Naive thymus-derived CD4-positive, alpha-beta T cell (primary cell): ENCODE measurements at regions of chr10 and their contacts with region 1.

Region 1: GRCh38 chr10:110871298-110872084 is at the start of gene PDCD4:
- DNase-seq: peak; percentile 83 to 98 (median 90)
- ATAC-seq: peak; percentile 78
- H3K4me3 ChIP-seq: peak within 1 kb of the TSS; percentile 78
- H3K4me3 Mint-ChIP-seq: peak within 1 kb of the TSS; percentile 79 to 99 (median 96)
- H3K27ac ChIP-seq: peak within 1 kb of the TSS; percentile 100
- H3K27ac Mint-ChIP-seq: peak within 1 kb of the TSS; percentile 95 to 100 (median 99)
- H3K4me1 ChIP-seq: peaks cover 53 to 71% of the 10 kb centered on the region in 2 donors
- H3K4me1 Mint-ChIP-seq: peaks cover 43 to 77% (median 68%) of the 10 kb centered on the region in 7 donors
- H3K27me3 ChIP-seq: no peaks in the 10 kb centered on the region
- H3K27me3 Mint-ChIP-seq: peaks cover 0 to 2% (median 0%) of the 10 kb centered on the region in 5 donors
- total RNA-seq, gene PDCD4: 93.7 to 283 (median 223) TPM

Region 2: GRCh38 chr10:109823196-109823595 is 1048.3 kb before region 1 on chr10:
- CTCF ChIA-PET with region 1: no interaction called
- POLR2A ChIA-PET with region 1: no interaction called
- intact Hi-C with region 1: no loop called
- DNase-seq: no peak
- ATAC-seq: no peak
- H3K4me3 ChIP-seq: no peak overlapping the region
- H3K4me3 Mint-ChIP-seq: no peak overlapping the region
- H3K27ac ChIP-seq: no peak overlapping the region
- H3K27ac Mint-ChIP-seq: no peak overlapping the region
- H3K4me1 ChIP-seq: no peaks in the 10 kb centered on the region
- H3K4me1 Mint-ChIP-seq: no peaks in the 10 kb centered on the region
- H3K27me3 ChIP-seq: no peaks in the 10 kb centered on the region
- H3K27me3 Mint-ChIP-seq: peaks cover 0 to 38% (median 32%) of the 10 kb centered on the region in 5 donors

Region 3: GRCh38 chr10:110304780-110305421 is 566.6 kb before region 1 on chr10 and contains the start of gene SMNDC1:
- CTCF ChIA-PET with region 1: no interaction called
- POLR2A ChIA-PET with region 1: no interaction called
- intact Hi-C with region 1: loop called in 1 of 2 experiments (anchors 5 kb)
- DNase-seq: peak; percentile 93 to 97 (median 96)
- ATAC-seq: peak; percentile 94
- H3K4me3 ChIP-seq: peak within 1 kb of the TSS; percentile 91
- H3K4me3 Mint-ChIP-seq: peak within 1 kb of the TSS; percentile 94 to 99 (median 98)
- H3K27ac ChIP-seq: peak within 1 kb of the TSS; percentile 89
- H3K27ac Mint-ChIP-seq: peak within 1 kb of the TSS; percentile 97 to 100 (median 100)
- H3K4me1 ChIP-seq: peaks cover 32 to 38% of the 10 kb centered on the region in 2 donors
- H3K4me1 Mint-ChIP-seq: peaks cover 26 to 61% (median 55%) of the 10 kb centered on the region in 7 donors
- H3K27me3 ChIP-seq: no peaks in the 10 kb centered on the region
- H3K27me3 Mint-ChIP-seq: no peaks in the 10 kb centered on the region
- total RNA-seq, gene SMNDC1: 34.4 to 43.1 (median 40.1) TPM

Region 4: GRCh38 chr10:110774069-110775019 is 97.1 kb before region 1 on chr10:
- CTCF ChIA-PET with region 1: no interaction called
- POLR2A ChIA-PET with region 1: no interaction called
- intact Hi-C with region 1: loop called in 1 of 2 experiments (anchors 1 kb)
- DNase-seq: peak in 1 of 9 donors; percentile 54
- ATAC-seq: peak; percentile 41
- H3K4me3 ChIP-seq: no peak overlapping the region
- H3K4me3 Mint-ChIP-seq: peak overlapping the region in 1 of 10 donors; percentile 42
- H3K27ac ChIP-seq: no peak overlapping the region
- H3K27ac Mint-ChIP-seq: peak overlapping the region in 2 of 9 donors; percentile 47 to 88
- H3K4me1 ChIP-seq: peaks cover 0 to 11% of the 10 kb centered on the region in 2 donors
- H3K4me1 Mint-ChIP-seq: peaks cover 2 to 39% (median 9%) of the 10 kb centered on the region in 7 donors
- H3K27me3 ChIP-seq: no peaks in the 10 kb centered on the region
- H3K27me3 Mint-ChIP-seq: peaks cover 0 to 3% (median 0%) of the 10 kb centered on the region in 5 donors

Region 5: DNA sequence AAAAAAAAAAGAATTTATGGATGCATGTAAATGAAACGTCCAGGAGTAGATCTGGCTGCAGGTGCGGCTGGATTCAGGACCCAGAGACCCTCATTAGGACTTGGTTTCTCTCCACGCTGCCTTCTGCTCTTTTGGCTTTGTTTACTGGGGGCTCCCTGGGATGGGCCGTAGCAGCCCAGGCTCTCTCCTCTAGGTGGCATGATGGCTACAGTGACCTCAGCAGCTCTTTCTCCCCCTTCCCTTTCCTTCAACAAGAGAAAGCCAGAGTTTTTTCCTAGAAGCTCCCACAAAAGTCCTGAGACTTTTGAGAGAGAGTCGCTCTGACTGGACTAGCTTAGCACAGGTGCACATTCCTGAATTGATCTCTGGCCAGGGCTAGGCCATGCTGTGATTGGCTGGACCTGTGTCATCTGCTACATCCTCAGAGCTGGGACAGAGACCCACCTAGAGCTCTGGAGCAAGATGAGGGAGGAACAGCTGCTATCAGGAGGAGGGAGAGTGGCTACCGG is 67.6 kb before region 1 on chr10:
- CTCF ChIA-PET with region 1: interaction called, 7 read pairs
- POLR2A ChIA-PET with region 1: interaction called, 46 read pairs
- intact Hi-C with region 1: loop called (anchors 1 kb)
- DNase-seq: peak in 2 of 9 donors; percentile 25 to 36
- ATAC-seq: peak; percentile 67
- H3K4me3 ChIP-seq: peak overlapping the region; percentile 29
- H3K4me3 Mint-ChIP-seq: peak overlapping the region in 9 of 10 donors; percentile 12 to 78 (median 69)
- H3K27ac ChIP-seq: peak overlapping the region; percentile 61
- H3K27ac Mint-ChIP-seq: peak overlapping the region; percentile 58 to 100 (median 93)
- H3K4me1 ChIP-seq: peaks cover 25 to 34% of the 10 kb centered on the region in 2 donors
- H3K4me1 Mint-ChIP-seq: peaks cover 30 to 53% (median 47%) of the 10 kb centered on the region in 7 donors
- H3K27me3 ChIP-seq: no peaks in the 10 kb centered on the region
- H3K27me3 Mint-ChIP-seq: no peaks in the 10 kb centered on the region

Region 6: GRCh38 chr10:110843031-110843430 is 28.5 kb before region 1 on chr10:
- CTCF ChIA-PET with region 1: interaction called, 3 read pairs
- POLR2A ChIA-PET with region 1: interaction called, 16 read pairs
- intact Hi-C with region 1: loop called in 1 of 2 experiments (anchors 1 kb)
- DNase-seq: peak in 7 of 9 donors; percentile 35 to 60 (median 46)
- ATAC-seq: peak; percentile 88
- H3K4me3 ChIP-seq: no peak overlapping the region
- H3K4me3 Mint-ChIP-seq: peak overlapping the region in 8 of 10 donors; percentile 1 to 67 (median 42)
- H3K27ac ChIP-seq: peak overlapping the region; percentile 40
- H3K27ac Mint-ChIP-seq: peak overlapping the region; percentile 79 to 98 (median 89)
- H3K4me1 ChIP-seq: peaks cover 22 to 27% of the 10 kb centered on the region in 2 donors
- H3K4me1 Mint-ChIP-seq: peaks cover 36 to 67% (median 54%) of the 10 kb centered on the region in 7 donors
- H3K27me3 ChIP-seq: no peaks in the 10 kb centered on the region
- H3K27me3 Mint-ChIP-seq: no peaks in the 10 kb centered on the region

Region 7: DNA sequence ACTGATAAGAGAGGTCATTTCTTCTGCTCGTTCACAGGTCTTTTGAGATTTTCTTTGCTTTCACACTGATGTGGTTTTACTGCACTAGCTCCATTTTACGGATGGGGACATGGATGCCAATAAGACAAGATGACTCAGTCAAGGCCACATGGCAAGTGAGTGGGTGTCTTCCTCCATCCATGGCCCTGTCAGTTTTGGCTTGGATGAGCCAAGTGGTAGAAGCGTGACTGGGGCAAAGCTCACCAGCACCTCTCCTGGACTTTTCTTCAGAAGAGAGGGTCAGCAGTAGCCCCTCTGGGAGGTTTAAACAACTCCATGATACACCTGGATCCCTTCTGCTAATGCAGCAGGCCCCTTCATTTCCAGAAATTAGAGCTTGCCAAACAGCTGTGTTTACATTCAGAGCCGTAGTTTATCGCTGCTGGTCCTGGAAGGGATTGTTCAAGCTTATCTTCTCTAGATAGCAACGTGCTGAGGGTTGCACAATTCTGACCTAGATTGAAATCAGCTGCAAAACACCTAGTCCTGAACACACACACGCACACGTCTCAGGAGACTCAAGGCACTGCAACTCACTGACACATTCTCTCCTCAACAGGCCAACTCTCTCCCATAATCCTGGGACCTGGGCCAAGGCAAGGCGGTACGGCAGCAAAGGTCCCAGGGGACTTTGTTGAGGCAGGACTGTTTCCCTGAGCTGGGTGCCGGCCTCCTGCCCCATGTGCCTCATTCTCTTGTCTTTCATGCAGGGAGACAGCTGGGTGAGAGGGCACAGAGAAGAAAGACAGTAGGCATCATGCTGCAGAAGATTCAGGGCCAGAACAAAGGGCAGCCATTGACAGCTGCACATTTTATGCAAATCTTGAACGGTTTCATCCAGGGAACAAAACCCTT is 14.0 kb before region 1 on chr10:
- CTCF ChIA-PET with region 1: interaction called, 7 read pairs
- POLR2A ChIA-PET with region 1: interaction called, 76 read pairs
- intact Hi-C with region 1: loop called (anchors 1 kb)
- DNase-seq: no peak
- ATAC-seq: peak; percentile 19
- H3K4me3 ChIP-seq: no peak overlapping the region
- H3K4me3 Mint-ChIP-seq: peak overlapping the region in 9 of 10 donors; percentile 29 to 79 (median 65)
- H3K27ac ChIP-seq: peak overlapping the region; percentile 83
- H3K27ac Mint-ChIP-seq: peak overlapping the region; percentile 67 to 100 (median 97)
- H3K4me1 ChIP-seq: peaks cover 81 to 89% of the 10 kb centered on the region in 2 donors
- H3K4me1 Mint-ChIP-seq: peaks cover 54 to 92% (median 88%) of the 10 kb centered on the region in 7 donors
- H3K27me3 ChIP-seq: no peaks in the 10 kb centered on the region
- H3K27me3 Mint-ChIP-seq: no peaks in the 10 kb centered on the region

Region 8: GRCh38 chr10:110893559-110894179 is 22.2 kb after region 1 on chr10:
- CTCF ChIA-PET with region 1: interaction called, 7 read pairs
- POLR2A ChIA-PET with region 1: interaction called, 7 read pairs
- intact Hi-C with region 1: loop called (anchors 1 to 2 kb)
- DNase-seq: peak in 6 of 9 donors; percentile 47 to 75 (median 66)
- ATAC-seq: peak; percentile 91
- H3K4me3 ChIP-seq: no peak overlapping the region
- H3K4me3 Mint-ChIP-seq: peak overlapping the region in 3 of 10 donors; percentile 2 to 34 (median 6)
- H3K27ac ChIP-seq: peak overlapping the region; percentile 56
- H3K27ac Mint-ChIP-seq: peak overlapping the region in 7 of 9 donors; percentile 2 to 68 (median 32)
- H3K4me1 ChIP-seq: peaks cover 0 to 20% of the 10 kb centered on the region in 2 donors
- H3K4me1 Mint-ChIP-seq: peaks cover 10 to 66% (median 51%) of the 10 kb centered on the region in 7 donors
- H3K27me3 ChIP-seq: no peaks in the 10 kb centered on the region
- H3K27me3 Mint-ChIP-seq: no peaks in the 10 kb centered on the region

Region 9: DNA sequence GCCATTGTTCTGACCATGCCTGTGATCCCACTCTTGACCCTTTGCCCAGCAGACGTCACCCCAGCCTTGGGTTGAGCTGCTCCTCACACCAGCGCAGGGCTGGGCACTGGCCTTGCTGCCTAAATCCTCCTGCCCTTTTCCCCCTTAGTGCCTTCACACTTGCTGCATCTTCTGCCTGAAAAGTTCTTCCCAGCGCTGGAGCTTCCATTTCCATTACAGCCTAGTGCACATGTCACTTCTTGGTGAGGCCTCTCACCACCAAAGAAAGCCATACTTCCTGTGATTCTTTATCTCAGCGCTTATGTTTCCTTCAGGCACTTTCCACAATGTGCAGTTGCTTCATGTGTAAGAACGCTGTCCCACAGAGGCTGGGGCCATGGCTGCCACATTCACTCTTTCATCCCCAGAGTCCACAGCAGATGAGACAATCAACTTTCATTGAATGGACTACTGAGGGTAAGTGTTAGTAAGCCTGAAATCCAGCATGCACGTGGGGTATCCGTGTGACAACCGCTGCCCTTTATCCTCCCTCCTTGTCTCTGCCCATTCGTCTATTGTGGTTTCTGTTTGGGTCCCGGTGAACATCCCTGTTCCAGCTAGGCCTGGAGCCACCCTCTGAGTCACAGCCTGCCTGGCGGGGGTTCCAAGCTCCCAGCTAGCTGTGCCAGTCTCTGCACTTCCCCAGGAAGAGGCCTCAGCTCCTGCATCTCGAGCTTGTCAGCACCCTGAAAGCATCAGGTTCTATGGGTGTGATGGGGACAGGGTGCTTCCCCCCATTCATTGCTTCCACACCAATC is 242.7 kb after region 1 on chr10:
- CTCF ChIA-PET with region 1: no interaction called
- POLR2A ChIA-PET with region 1: no interaction called
- intact Hi-C with region 1: no loop called
- DNase-seq: no peak
- ATAC-seq: peak; percentile 19
- H3K4me3 ChIP-seq: no peak overlapping the region
- H3K4me3 Mint-ChIP-seq: peak overlapping the region in 1 of 10 donors; percentile 24
- H3K27ac ChIP-seq: no peak overlapping the region
- H3K27ac Mint-ChIP-seq: peak overlapping the region in 1 of 9 donors; percentile 26
- H3K4me1 ChIP-seq: no peaks in the 10 kb centered on the region
- H3K4me1 Mint-ChIP-seq: peaks cover 9 to 21% (median 13%) of the 10 kb centered on the region in 7 donors
- H3K27me3 ChIP-seq: no peaks in the 10 kb centered on the region
- H3K27me3 Mint-ChIP-seq: peaks cover 0 to 11% (median 0%) of the 10 kb centered on the region in 5 donors

Region 10: GRCh38 chr10:111207500-111207899 is 336.0 kb after region 1 on chr10:
- CTCF ChIA-PET with region 1: no interaction called
- POLR2A ChIA-PET with region 1: no interaction called
- intact Hi-C with region 1: no loop called
- DNase-seq: peak in 5 of 9 donors; percentile 1 to 19 (median 12)
- ATAC-seq: no peak
- H3K4me3 ChIP-seq: no peak overlapping the region
- H3K4me3 Mint-ChIP-seq: no peak overlapping the region
- H3K27ac ChIP-seq: no peak overlapping the region
- H3K27ac Mint-ChIP-seq: no peak overlapping the region
- H3K4me1 ChIP-seq: no peaks in the 10 kb centered on the region
- H3K4me1 Mint-ChIP-seq: no peaks in the 10 kb centered on the region
- H3K27me3 ChIP-seq: no peaks in the 10 kb centered on the region
- H3K27me3 Mint-ChIP-seq: peaks cover 0 to 16% (median 11%) of the 10 kb centered on the region in 5 donors

Region 11: DNA sequence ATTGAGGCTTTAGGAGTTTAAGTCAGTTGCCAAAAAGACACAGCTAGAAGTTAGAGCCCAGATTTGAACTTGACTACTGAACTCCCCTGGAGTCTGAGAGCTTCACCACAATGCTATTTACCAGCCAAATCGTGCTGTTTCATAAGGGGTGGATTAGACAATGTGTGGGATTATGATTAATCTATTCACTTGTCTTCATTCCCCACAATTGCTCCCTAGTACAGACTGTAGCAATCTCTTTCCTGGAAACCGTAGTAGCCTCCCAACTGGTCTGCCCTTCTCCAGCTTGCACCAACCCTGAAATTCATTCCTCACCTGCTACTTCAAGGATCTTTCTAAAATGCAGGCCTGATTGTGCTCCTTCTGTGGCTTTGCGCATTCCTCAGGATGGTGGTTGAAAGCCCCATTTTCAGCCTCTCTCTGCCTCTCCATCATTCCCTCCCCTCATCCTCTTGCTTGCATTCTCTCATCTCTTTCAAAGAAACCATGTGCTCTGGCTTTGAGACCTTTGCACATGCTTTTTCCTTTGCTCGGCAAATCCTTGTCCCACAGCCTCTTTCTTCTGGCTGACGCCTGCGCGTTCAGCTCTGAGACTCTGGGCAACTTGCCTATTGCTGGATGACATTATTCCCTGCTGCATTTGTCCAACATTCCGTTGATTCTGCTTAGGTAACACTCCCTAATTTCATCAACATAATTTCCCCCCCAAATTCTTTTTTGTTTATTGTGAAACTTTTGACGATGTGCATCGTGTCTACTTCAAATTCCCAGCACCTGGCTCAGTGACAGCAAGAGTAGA is 350.4 kb after region 1 on chr10:
- CTCF ChIA-PET with region 1: no interaction called
- POLR2A ChIA-PET with region 1: no interaction called
- intact Hi-C with region 1: no loop called
- DNase-seq: no peak
- ATAC-seq: no peak
- H3K4me3 ChIP-seq: no peak overlapping the region
- H3K4me3 Mint-ChIP-seq: no peak overlapping the region
- H3K27ac ChIP-seq: no peak overlapping the region
- H3K27ac Mint-ChIP-seq: no peak overlapping the region
- H3K4me1 ChIP-seq: no peaks in the 10 kb centered on the region
- H3K4me1 Mint-ChIP-seq: no peaks in the 10 kb centered on the region
- H3K27me3 ChIP-seq: no peaks in the 10 kb centered on the region
- H3K27me3 Mint-ChIP-seq: peaks cover 29 to 81% (median 74%) of the 10 kb centered on the region in 5 donors